ENCODE measurements at regions of chr3 and their contacts with region 1.

Region 1: DNA sequence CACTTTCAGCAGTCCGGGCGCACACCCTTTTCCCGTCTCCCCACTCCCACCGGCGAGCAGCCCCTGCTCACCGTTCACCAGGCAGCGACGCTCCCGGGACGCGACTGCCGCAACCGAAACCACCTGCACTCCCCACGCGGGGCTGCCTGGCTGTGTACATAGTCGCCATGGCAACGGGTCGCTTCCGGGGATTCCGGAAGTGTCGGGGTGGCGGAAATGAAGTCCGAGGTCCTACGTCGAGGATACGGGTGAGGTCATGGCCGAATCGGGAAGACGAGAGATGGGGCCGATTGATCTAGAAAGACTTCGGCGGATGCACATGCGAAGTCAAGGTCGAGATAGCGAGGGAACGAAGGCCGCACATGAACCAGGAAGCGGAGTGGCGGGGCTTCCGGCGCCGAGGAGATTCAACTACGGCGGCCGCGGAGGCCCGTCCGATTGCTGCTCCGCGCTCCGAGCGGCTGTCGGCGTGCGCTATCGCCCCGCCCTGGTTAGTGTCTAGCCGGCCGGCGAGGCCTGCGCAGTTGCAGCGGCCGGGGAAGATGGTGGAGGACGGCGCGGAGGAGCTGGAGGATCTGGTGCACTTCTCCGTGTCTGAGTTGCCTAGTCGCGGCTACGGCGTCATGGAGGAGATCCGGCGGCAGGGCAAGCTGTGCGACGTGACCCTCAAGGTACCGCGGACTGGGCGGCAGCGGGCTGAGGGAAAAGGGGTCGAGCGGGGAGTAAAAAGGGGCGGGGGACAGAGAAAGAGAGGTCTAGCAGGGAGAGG is at the starts of genes KIF9 and KLHL18:
- DNase-seq: peak; percentile 97
- ATAC-seq: peak; percentile 91
- H3K4me3 Mint-ChIP-seq: peak within 1 kb of the TSS; percentile 95
- H3K27ac Mint-ChIP-seq: peak within 1 kb of the TSS; percentile 99
- H3K4me1 Mint-ChIP-seq: peaks cover 31% of the 10 kb centered on the region
- H3K27me3 Mint-ChIP-seq: no peaks in the 10 kb centered on the region
- total RNA-seq, gene KIF9: 2.7 to 5.3 TPM
- total RNA-seq, gene KLHL18: 19.0 to 22.4 TPM

Region 2: GRCh38 chr3:47016934-47017435 is 265.6 kb before region 1 on chr3:
- CTCF ChIA-PET with region 1: no interaction called
- POLR2A ChIA-PET with region 1: no interaction called
- intact Hi-C with region 1: loop called in 1 of 2 experiments (anchors 5 kb)
- DNase-seq: peak; percentile 62
- ATAC-seq: peak; percentile 79
- H3K4me3 Mint-ChIP-seq: peak overlapping the region; percentile 24
- H3K27ac Mint-ChIP-seq: peak overlapping the region; percentile 85
- H3K4me1 Mint-ChIP-seq: peaks cover 46% of the 10 kb centered on the region
- H3K27me3 Mint-ChIP-seq: no peaks in the 10 kb centered on the region

Region 3: DNA sequence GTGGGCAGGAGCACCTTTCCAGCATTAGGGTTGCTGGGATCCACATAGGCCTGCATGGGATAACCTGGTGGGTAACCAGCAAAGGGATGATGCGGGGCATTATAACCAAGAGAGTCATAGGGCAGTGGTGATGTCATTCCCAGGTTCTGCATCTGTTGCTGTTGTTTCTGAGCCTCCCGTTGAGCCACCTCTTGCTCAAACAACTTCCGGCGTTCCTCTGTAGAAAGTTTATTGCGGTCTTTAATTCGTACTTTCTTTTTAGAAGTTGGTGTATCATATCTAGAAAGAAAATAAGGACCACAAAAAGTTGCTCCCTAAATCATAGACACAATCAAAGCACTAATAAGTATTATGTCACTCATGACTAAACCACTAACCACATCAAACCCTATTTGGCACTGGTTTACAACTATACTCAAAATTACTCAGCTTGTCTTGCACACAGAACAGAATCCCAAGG is 225.4 kb before region 1 on chr3:
- CTCF ChIA-PET with region 1: no interaction called
- POLR2A ChIA-PET with region 1: no interaction called
- intact Hi-C with region 1: loop called in 1 of 2 experiments (anchors 2 kb)
- DNase-seq: peak; percentile 69
- ATAC-seq: peak; percentile 88
- H3K4me3 Mint-ChIP-seq: no peak overlapping the region
- H3K27ac Mint-ChIP-seq: peak overlapping the region; percentile 69
- H3K4me1 Mint-ChIP-seq: peaks cover 37% of the 10 kb centered on the region
- H3K27me3 Mint-ChIP-seq: no peaks in the 10 kb centered on the region

Region 4: GRCh38 chr3:47433796-47434195 is 151.2 kb after region 1 on chr3:
- CTCF ChIA-PET with region 1: no interaction called
- POLR2A ChIA-PET with region 1: no interaction called
- intact Hi-C with region 1: no loop called
- DNase-seq: no peak
- ATAC-seq: no peak
- H3K4me3 Mint-ChIP-seq: no peak overlapping the region
- H3K27ac Mint-ChIP-seq: no peak overlapping the region
- H3K4me1 Mint-ChIP-seq: peaks cover 5% of the 10 kb centered on the region
- H3K27me3 Mint-ChIP-seq: no peaks in the 10 kb centered on the region

Region 5: DNA sequence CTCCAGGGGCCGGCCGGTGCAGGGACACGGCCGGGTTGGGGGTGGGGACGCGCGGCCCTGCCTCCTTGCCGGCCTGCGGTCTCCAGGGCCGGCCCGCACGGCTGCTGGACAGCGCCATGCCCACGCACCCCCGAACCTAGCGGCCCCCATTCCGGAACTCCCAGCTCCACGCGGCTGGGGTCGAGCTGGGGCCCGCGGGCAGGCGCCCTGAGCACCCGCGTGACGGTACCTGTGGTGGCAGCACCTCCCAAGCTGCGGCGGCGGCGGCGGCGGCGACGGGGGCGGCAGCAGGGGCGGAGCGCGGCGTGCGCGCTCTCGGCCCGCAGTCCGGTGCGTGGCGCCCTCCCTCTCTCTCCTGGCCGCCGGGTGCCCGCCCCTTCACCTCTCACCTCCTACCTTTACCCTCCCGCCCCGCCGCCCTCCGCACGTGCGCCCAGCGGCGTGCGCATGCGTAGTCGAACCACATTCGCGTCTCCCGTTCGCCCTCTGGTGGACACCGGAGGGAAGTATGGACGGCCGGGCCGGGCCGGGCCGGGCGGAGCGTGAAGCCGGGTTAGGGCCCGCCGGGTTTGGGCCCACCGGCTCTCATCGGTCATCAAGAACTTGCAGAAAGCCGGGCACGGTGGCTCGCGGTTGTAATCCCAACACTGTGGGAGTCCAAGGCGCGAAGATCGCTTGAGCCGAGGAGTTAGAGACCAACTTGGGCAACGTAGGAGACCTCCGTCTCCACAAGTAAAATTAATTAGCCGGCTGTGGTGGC is 193.1 kb after region 1 on chr3 and contains the start of gene SCAP:
- CTCF ChIA-PET with region 1: no interaction called
- POLR2A ChIA-PET with region 1: no interaction called
- intact Hi-C with region 1: loop called in 1 of 2 experiments (anchors 1 kb)
- DNase-seq: peak; percentile 98
- ATAC-seq: peak; percentile 95
- H3K4me3 Mint-ChIP-seq: peak within 1 kb of the TSS; percentile 89
- H3K27ac Mint-ChIP-seq: peak within 1 kb of the TSS; percentile 84
- H3K4me1 Mint-ChIP-seq: peaks cover 33% of the 10 kb centered on the region
- H3K27me3 Mint-ChIP-seq: no peaks in the 10 kb centered on the region
- total RNA-seq, gene SCAP: 44.5 to 51.2 TPM

Region 6: DNA sequence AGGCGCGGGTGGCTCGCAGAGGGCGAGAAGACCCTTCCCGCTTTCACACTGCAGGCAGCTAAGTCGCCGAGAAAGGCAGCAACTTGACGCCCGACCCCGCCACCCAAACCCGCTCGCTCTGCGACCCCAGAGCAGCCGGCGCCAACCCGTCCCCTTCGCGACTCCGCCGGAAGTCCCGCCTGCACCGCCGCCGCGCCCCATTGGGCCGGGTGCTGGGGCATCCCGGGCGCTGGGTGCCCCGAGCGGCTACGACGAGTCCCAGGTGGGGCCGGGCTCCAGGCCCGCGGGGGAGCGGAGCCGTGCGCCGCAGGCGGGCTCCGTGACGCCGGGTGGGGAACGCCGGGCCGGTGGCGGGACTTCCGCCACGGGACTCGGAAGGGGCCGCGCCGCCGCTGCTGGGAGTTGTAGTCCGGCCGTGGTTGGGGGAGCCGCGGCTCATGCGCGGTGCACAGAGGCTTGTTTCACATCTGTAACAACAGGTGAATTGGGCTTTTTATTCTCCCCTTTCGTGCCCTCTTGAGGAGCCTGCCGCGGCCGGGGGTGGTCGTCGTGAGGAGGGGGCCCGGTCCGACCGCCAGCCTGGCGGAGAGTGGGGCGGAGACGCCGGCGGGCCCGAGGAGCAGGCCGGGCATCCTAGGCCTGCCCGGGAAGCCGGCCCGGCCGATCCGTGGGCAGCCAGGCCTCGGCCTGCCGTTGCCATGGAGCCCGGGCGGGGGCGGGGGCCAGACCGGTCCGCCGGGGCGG is 520.3 kb after region 1 on chr3 and contains the start of gene DHX30:
- CTCF ChIA-PET with region 1: no interaction called
- POLR2A ChIA-PET with region 1: no interaction called
- intact Hi-C with region 1: loop called in 1 of 2 experiments (anchors 1 kb)
- DNase-seq: peak; percentile 93
- ATAC-seq: peak; percentile 92
- H3K4me3 Mint-ChIP-seq: peak within 1 kb of the TSS; percentile 96
- H3K27ac Mint-ChIP-seq: peak within 1 kb of the TSS; percentile 98
- H3K4me1 Mint-ChIP-seq: peaks cover 24% of the 10 kb centered on the region
- H3K27me3 Mint-ChIP-seq: no peaks in the 10 kb centered on the region
- total RNA-seq, gene DHX30: 81.6 to 82.3 TPM

Measured in activated CD4-positive, alpha-beta T cell treated with anti-CD3 and anti-CD28 coated beads for 36 hours (primary cell).